Right ventricle myocardium inferior (tissue), 1 donor: ENCODE measurements at regions of chr10 and their contacts with region 1.

Region 1: GRCh38 chr10:99612167-99612831 is 7.9 kb downstream of the SLC25A28 start:
- DNase-seq: no peak
- ATAC-seq: peak; percentile 62

Region 2: DNA sequence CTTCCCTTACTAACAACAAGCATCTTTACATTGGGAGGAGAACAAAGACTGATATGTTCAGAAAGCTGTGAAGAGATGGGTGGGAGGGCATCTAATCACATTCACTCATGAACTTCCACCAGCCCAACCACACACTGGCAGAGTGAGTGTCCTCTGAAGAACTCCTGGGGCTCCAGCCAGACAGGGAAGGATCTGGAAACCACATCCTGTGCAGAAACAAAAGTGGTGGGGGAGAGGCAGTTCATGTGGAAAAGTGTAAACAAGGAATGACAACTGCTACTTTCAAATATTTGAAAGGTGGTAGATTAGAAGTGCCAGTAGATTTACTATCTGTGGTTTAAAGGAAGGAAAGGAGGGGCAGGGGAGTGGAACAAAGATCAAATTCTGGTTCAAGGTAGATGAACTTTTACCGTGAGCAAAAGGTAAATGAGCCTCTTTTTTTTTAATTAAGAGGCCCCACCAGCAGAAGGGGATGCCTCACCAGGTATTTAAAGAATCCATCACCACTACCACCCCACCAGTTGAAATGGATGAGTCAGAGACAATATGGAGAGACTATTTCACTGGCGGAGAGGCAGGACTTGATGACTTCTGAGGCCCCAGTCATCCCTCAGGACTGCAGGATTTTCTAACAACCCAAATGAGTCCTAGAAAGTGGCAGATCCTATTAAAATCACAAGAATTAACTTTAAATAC is 216.4 kb before region 1 on chr10:
- intact Hi-C with region 1: loop called (anchors 2 kb)
- DNase-seq: no peak
- ATAC-seq: no peak